Activated CD4-positive, alpha-beta T cell treated with anti-CD3 and anti-CD28 coated beads, Interleukin-2, amount 10 ng/mL, durations not matched to agents 24 days and 14 days (primary cell): ENCODE measurements at regions of chr20 and their contacts with region 1.

Region 1: GRCh38 chr20:10553326-10553984 is 118.3 kb downstream of the SLX4IP start:
- DNase-seq: peak; percentile 83
- H3K4me3 Mint-ChIP-seq: no peak overlapping the region
- H3K27ac Mint-ChIP-seq: no peak overlapping the region
- H3K4me1 Mint-ChIP-seq: peaks cover 28% of the 10 kb centered on the region
- H3K27me3 Mint-ChIP-seq: no peaks in the 10 kb centered on the region

Region 2: DNA sequence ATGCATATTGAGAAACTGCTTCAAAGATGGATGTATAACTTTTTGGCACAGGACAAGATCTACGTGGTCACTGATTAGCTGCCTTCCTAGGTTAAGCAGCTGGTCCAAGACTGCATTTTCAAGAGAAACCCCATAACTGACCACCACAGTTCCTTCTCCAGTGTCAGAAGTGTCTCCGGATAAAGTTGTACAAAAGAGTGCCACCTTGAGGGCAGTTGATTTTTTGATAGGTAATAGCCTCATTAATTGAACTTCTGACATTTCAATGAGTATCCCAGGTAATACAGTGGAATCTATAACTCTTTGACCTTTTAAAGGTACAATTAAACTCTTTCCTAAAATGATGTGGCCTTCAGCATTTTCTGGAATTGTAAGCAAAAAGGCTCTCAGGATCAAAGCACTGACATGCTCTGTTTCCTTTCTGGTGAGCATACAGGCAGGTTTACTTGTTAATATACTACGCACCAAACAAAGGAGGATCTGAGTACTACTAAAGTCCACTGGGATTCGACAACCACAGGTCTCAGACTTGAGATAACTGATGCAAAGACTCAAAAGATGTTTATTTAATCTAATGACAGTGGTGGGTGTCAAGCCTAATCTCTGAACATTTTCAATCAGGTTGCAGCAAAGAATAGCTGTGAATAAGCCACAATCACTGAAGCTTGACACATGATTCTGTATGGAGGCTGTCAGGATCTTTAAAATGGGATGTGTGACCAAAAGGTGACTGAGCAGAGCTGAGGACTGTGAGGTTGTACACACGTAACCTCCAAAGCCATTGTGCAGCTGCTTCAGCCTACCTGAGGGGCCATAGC is 140.7 kb before region 1 on chr20:
- intact Hi-C with region 1: no loop called
- DNase-seq: no peak
- H3K4me3 Mint-ChIP-seq: no peak overlapping the region
- H3K27ac Mint-ChIP-seq: no peak overlapping the region
- H3K4me1 Mint-ChIP-seq: no peaks in the 10 kb centered on the region
- H3K27me3 Mint-ChIP-seq: no peaks in the 10 kb centered on the region

Region 3: GRCh38 chr20:10521068-10521831 is 32.2 kb before region 1 on chr20:
- intact Hi-C with region 1: loop called (anchors 1 kb)
- DNase-seq: no peak
- H3K4me3 Mint-ChIP-seq: peak overlapping the region; percentile 3
- H3K27ac Mint-ChIP-seq: peak overlapping the region; percentile 72
- H3K4me1 Mint-ChIP-seq: peaks cover 25% of the 10 kb centered on the region
- H3K27me3 Mint-ChIP-seq: no peaks in the 10 kb centered on the region

Region 4: DNA sequence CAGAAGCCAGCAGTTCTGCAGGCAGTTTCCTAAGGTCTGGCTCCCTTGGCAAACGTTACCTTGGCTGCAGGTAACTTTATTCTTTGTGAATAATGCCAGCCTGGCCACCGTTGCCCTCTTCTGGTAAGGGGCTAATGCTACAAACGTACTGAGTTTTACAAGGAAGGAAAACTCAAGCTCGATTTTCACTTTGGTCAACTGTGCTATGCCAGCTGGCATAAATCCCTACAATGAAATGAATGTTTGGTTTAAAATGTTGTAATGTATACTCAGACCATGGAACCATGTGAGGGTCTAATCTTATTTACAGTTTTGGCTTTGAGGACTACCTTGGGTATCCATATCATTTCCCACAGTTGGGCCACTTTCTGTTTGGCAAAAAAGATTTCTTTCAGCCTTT is 16.9 kb before region 1 on chr20:
- intact Hi-C with region 1: no loop called
- DNase-seq: peak; percentile 78
- H3K4me3 Mint-ChIP-seq: no peak overlapping the region
- H3K27ac Mint-ChIP-seq: no peak overlapping the region
- H3K4me1 Mint-ChIP-seq: peaks cover 11% of the 10 kb centered on the region
- H3K27me3 Mint-ChIP-seq: no peaks in the 10 kb centered on the region

Region 5: GRCh38 chr20:10578607-10579006 is 25.2 kb after region 1 on chr20:
- intact Hi-C with region 1: no loop called
- DNase-seq: no peak
- H3K4me3 Mint-ChIP-seq: no peak overlapping the region
- H3K27ac Mint-ChIP-seq: no peak overlapping the region
- H3K4me1 Mint-ChIP-seq: peaks cover 15% of the 10 kb centered on the region
- H3K27me3 Mint-ChIP-seq: no peaks in the 10 kb centered on the region

Region 6: DNA sequence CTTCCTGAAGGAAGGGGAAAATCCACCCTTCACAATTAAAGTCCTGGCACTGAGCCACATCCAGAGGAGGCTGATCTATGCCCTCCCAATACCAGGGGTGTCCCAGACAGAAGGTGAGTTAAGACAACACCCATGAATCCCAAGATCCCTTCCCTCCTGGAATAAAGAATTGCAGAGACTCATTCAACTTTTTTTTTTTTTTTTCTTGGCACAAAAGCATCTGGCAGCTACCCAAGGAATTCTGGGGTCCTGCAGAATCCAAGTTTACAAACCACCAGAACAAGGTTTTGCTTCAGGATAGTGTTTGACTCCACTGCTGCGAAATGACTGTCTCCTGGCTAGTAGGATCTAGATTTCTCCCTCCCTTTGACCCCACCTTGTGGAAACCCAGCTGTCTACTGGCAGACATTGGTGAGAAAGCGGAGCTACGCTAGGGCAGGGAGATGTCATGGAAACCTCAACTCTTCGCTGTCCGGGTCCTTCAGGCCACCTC is 82.9 kb after region 1 on chr20:
- intact Hi-C with region 1: no loop called
- DNase-seq: no peak
- H3K4me3 Mint-ChIP-seq: no peak overlapping the region
- H3K27ac Mint-ChIP-seq: no peak overlapping the region
- H3K4me1 Mint-ChIP-seq: no peaks in the 10 kb centered on the region
- H3K27me3 Mint-ChIP-seq: no peaks in the 10 kb centered on the region

Region 7: DNA sequence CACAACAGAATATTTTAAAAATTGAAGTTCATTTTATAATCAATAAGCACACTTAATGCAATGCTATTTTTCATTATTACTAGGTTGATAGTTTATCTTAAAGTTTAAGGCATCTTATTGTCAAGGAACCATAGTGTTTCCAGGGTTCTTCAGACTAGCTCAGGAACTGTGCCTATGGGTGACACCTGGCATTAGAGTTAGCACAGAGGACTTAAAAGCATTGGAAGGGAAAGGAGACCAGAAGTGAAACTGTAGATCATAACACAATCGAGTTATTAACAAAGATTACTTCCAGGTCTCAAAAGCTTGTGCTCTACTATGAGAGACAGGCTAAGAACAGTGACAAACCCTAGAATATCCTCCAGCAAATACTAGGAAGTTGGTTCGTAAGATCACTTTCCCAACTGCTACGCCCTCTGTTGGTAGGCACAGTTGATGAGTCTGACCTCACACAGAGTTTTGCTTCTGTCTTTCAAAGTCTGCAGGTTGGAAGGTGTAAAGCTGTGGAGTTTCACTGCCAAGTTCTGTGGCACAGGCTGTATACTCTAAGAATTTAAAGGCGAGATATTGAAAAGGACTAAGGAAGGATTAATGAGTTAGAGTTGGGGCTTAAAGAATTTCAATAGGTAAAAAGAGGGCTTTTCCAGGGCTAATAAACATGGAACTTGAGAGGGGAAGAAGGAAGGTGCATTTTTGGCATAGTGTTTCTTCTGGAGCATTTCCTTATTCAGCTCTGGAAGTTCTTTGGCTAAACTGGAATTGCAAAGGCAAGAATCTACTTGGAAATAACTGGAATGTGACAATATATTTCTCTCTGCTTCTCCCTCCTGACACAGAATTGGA is 651.7 kb after region 1 on chr20:
- intact Hi-C with region 1: loop called (anchors 1 kb)
- DNase-seq: peak; percentile 66
- H3K4me3 Mint-ChIP-seq: no peak overlapping the region
- H3K27ac Mint-ChIP-seq: no peak overlapping the region
- H3K4me1 Mint-ChIP-seq: no peaks in the 10 kb centered on the region
- H3K27me3 Mint-ChIP-seq: no peaks in the 10 kb centered on the region

Region 8: GRCh38 chr20:11274141-11274594 is 720.7 kb after region 1 on chr20:
- intact Hi-C with region 1: loop called (anchors 5 kb)
- DNase-seq: no peak
- H3K4me3 Mint-ChIP-seq: no peak overlapping the region
- H3K27ac Mint-ChIP-seq: no peak overlapping the region
- H3K4me1 Mint-ChIP-seq: no peaks in the 10 kb centered on the region
- H3K27me3 Mint-ChIP-seq: no peaks in the 10 kb centered on the region